ENCODE measurements at regions of chr20 and their contacts with region 1.

Region 1: GRCh38 chr20:1802385-1803060 is 92.7 kb upstream of the SIRPA start:
- DNase-seq: no peak
- ATAC-seq: peak; percentile 88
- H3K4me3 ChIP-seq: peak overlapping the region; percentile 62
- H3K27ac ChIP-seq: no peak overlapping the region
- H3K4me1 ChIP-seq: peaks cover 13% of the 10 kb centered on the region
- H3K27me3 ChIP-seq: peaks cover 2% of the 10 kb centered on the region in 2 experiments; a peak in 1 of 4 replicates
- CTCF ChIP-seq: peak; percentile 75 to 78 (median 77)
- EP300 ChIP-seq: no peak
- POLR2A ChIP-seq: no peak
- RAD21 ChIP-seq: peak; percentile 83

Region 2: GRCh38 chr20:1764136-1765033 is 38.1 kb before region 1 on chr20:
- CTCF ChIA-PET with region 1: interaction called, 12 read pairs
- POLR2A ChIA-PET with region 1: no interaction called
- RAD21 ChIA-PET with region 1: interaction called, 4 read pairs
- SMC1A ChIA-PET with region 1: interaction called, 4 read pairs
- in situ Hi-C with region 1: no loop called
- intact Hi-C with region 1: no loop called
- DNase-seq: peak; percentile 57
- ATAC-seq: peak; percentile 100
- H3K4me3 ChIP-seq: no peak overlapping the region
- H3K27ac ChIP-seq: no peak overlapping the region
- H3K4me1 ChIP-seq: peaks cover 4% of the 10 kb centered on the region
- H3K27me3 ChIP-seq: peaks cover 0 to 2% of the 10 kb centered on the region in 2 experiments; a peak in 2 of 4 replicates
- CTCF ChIP-seq: peak; percentile 80 to 89 (median 81)
- EP300 ChIP-seq: no peak
- POLR2A ChIP-seq: no peak
- RAD21 ChIP-seq: peak; percentile 79

Region 3: DNA sequence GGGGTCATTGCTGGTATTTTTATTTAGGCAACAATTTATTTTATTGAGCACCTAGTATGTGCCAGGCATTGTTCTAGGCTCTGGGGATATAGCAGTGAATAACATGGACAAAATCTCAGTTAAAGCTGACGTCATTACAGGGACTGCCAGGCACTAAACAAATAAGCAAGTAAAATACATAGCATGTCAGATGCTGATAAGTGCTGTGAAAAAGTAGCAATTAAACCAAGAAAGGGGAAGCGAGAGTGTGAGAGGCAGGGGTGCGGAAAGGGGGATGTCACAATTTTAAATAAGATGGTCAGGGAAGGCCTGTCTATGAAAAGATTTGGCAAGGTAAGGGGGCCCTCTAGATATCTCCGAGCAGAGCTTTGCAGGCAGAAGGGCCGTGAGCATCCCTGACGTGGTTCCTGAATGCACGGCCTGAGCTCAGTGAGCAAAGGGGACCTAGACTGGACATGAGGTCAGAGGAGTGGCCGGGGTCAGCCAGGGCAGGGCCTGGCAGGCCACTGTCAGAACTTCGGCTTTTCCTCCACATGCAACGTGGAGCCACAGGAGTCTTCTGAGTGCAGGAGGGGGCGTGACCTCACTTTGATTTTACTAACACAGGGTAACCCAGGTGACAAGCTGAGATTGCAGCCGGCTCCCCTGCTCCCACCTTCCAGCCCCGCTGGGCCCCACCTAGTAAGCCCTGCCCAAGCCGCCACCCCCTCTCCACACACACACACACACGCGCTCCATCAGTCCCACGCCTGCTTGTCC is 68.4 kb after region 1 on chr20:
- CTCF ChIA-PET with region 1: interaction called, 27 read pairs
- POLR2A ChIA-PET with region 1: no interaction called
- RAD21 ChIA-PET with region 1: interaction called, 25 read pairs
- SMC1A ChIA-PET with region 1: interaction called, 19 read pairs
- in situ Hi-C with region 1: no loop called
- intact Hi-C with region 1: loop called (anchors 2 kb)
- DNase-seq: peak; percentile 71
- ATAC-seq: peak; percentile 87
- H3K4me3 ChIP-seq: no peak overlapping the region
- H3K27ac ChIP-seq: peak overlapping the region; percentile 20; the same call in 1 of the 2 replicates
- H3K4me1 ChIP-seq: peaks cover 21% of the 10 kb centered on the region
- H3K27me3 ChIP-seq: no peaks in the 10 kb centered on the region
- CTCF ChIP-seq: peak in 1 of 3 experiments; percentile 15; a peak in 1 of 6 replicates
- EP300 ChIP-seq: peak; percentile 79 to 84; a peak in 3 of 4 replicates
- POLR2A ChIP-seq: no peak
- RAD21 ChIP-seq: no peak

Region 4: GRCh38 chr20:1952737-1953530 is 150.4 kb after region 1 on chr20:
- CTCF ChIA-PET with region 1: interaction called, 6 read pairs
- POLR2A ChIA-PET with region 1: interaction called, 4 read pairs
- RAD21 ChIA-PET with region 1: interaction called, 7 read pairs
- SMC1A ChIA-PET with region 1: interaction called, 3 read pairs
- in situ Hi-C with region 1: no loop called
- intact Hi-C with region 1: loop called (anchors 5 kb)
- DNase-seq: peak; percentile 15
- ATAC-seq: peak; percentile 82
- H3K4me3 ChIP-seq: no peak overlapping the region
- H3K27ac ChIP-seq: no peak overlapping the region
- H3K4me1 ChIP-seq: peaks cover 18% of the 10 kb centered on the region
- H3K27me3 ChIP-seq: no peaks in the 10 kb centered on the region
- CTCF ChIP-seq: no peak
- EP300 ChIP-seq: no peak
- POLR2A ChIP-seq: no peak
- RAD21 ChIP-seq: no peak

Region 5: GRCh38 chr20:2093159-2093781 is 290.7 kb after region 1 on chr20:
- CTCF ChIA-PET with region 1: interaction called, 11 read pairs
- POLR2A ChIA-PET with region 1: no interaction called
- RAD21 ChIA-PET with region 1: interaction called, 6 read pairs
- SMC1A ChIA-PET with region 1: no interaction called
- in situ Hi-C with region 1: no loop called
- intact Hi-C with region 1: no loop called
- DNase-seq: no peak
- ATAC-seq: peak; percentile 86
- H3K4me3 ChIP-seq: no peak overlapping the region
- H3K27ac ChIP-seq: no peak overlapping the region
- H3K4me1 ChIP-seq: no peaks in the 10 kb centered on the region; the same call in 1 of the 2 replicates
- H3K27me3 ChIP-seq: peaks cover 0 to 1% of the 10 kb centered on the region in 2 experiments; a peak in 2 of 4 replicates
- CTCF ChIP-seq: peak; percentile 58 to 66 (median 59)
- EP300 ChIP-seq: no peak
- POLR2A ChIP-seq: no peak
- RAD21 ChIP-seq: peak; percentile 50